CD8-positive, alpha-beta T cell (primary cell): ENCODE measurements at regions of chr16 and their contacts with region 1.

Region 1: DNA sequence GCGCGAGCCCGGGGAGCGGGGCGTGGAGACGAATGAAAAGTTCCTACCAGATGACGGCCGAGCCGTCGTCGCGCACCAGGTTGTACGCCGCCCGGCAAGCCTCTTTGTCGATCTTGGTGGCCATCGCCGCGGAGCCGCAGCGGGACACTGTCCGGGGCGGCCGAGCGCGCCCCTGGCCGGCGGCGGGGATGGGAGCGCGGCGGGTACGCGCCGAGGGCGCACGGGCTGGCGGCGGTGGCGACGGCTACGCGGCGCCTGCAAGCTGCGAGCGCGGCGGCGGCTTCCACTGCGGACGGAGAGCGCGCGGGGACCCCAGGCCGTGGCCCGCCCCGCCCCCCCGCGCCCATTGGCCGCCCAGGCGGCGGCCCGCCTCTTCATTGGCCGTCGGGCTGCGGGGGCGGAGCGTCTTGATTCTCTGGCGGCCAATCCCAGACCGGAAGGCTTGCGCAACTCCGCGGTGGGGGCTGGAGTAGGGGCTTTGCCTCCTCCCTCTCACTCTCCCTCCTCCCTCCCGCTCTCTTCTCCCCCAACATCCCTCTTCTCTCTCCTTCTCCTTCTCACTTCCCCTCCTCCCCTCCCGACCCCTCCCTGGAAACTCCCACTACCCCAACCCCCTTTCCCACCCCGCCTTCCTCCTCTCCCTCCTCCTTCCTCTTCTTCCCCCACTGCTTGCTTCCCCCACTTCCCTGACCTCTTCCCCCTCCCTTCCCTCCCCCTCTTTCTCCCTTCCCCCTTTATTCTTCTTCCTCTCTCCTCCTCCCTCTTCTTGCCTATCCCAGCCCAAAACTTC is at the start of gene COTL1:
- DNase-seq: peak; percentile 85 to 97 (median 95)
- ATAC-seq: peak; percentile 86
- H3K4me3 ChIP-seq: peak within 1 kb of the TSS; percentile 80 to 82
- H3K4me3 Mint-ChIP-seq: peak within 1 kb of the TSS; percentile 95
- H3K27ac ChIP-seq: peak within 1 kb of the TSS; percentile 49 to 66
- H3K27ac Mint-ChIP-seq: peak within 1 kb of the TSS; percentile 90
- H3K4me1 ChIP-seq: peaks cover 43% of the 10 kb centered on the region
- H3K4me1 Mint-ChIP-seq: peaks cover 47% of the 10 kb centered on the region
- H3K27me3 ChIP-seq: peaks cover 0 to 4% of the 10 kb centered on the region in 2 experiments
- H3K27me3 Mint-ChIP-seq: no peaks in the 10 kb centered on the region
- CTCF ChIP-seq: no peak
- total RNA-seq, gene COTL1: 194 to 199 TPM

Region 2: DNA sequence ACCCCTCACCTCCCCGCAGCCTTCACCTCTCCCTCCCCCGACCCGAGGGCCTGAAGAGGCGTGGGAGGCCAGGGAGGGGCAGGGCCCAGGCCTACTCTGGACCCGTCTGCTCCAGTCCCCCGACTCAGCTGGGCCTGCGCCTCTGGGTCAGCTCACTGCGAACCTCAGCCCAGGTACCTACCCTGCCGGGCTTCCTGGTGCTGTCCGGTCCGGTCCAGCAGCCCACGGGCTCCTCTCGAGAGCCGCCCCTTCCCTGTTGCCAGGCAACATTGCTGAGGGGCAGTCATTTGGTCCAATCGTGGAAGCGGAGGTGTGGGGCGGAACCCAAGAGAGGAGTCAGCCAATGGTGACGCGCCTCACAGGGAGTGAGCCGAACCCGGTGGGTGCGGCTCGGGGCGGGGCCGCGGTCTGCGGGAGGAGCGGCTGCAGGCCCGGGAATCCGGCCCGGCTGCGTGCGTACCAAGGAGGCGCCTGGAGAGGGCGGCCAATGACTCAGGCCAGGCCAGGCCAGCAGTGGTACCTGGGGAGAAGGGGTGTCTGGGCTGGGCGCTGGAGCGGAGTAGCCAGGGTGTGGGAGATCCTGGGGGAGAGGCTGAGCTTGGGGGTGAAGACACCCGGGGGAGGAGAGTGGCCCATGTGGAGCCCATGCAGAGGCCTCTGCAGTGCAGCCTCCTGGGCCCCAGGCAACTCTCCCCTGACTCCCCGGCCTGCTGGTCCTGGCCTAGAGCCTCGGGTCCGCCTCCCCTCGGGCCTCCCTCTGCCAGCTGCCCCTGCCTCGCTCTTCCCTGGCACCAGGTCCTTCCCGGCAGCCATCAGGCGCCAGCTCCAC is 113.4 kb before region 1 on chr16 and contains the start of gene MEAK7:
- CTCF ChIA-PET with region 1: interaction called, 392 read pairs
- POLR2A ChIA-PET with region 1: interaction called, 8 read pairs
- intact Hi-C with region 1: no loop called
- DNase-seq: peak; percentile 95 to 98 (median 97)
- ATAC-seq: peak; percentile 94
- H3K4me3 ChIP-seq: peak within 1 kb of the TSS; percentile 74 to 83
- H3K4me3 Mint-ChIP-seq: peak within 1 kb of the TSS; percentile 90
- H3K27ac ChIP-seq: peak within 1 kb of the TSS; percentile 43
- H3K27ac Mint-ChIP-seq: peak within 1 kb of the TSS; percentile 84
- H3K4me1 ChIP-seq: peaks cover 56% of the 10 kb centered on the region
- H3K4me1 Mint-ChIP-seq: peaks cover 57% of the 10 kb centered on the region
- H3K27me3 ChIP-seq: peaks cover 0 to 2% of the 10 kb centered on the region in 2 experiments
- H3K27me3 Mint-ChIP-seq: no peaks in the 10 kb centered on the region
- CTCF ChIP-seq: no peak
- total RNA-seq, gene MEAK7: 2.1 to 2.2 TPM

Region 3: GRCh38 chr16:84555418-84556195 is 62.4 kb before region 1 on chr16:
- CTCF ChIA-PET with region 1: interaction called, 19 read pairs
- POLR2A ChIA-PET with region 1: interaction called, 8 read pairs
- intact Hi-C with region 1: loop called in 1 of 2 experiments (anchors 1 kb)
- DNase-seq: peak in 2 of 9 experiments; percentile 12 to 48
- ATAC-seq: no peak
- H3K4me3 ChIP-seq: no peak overlapping the region
- H3K4me3 Mint-ChIP-seq: no peak overlapping the region
- H3K27ac ChIP-seq: peak overlapping the region in 1 of 2 experiments; percentile 63
- H3K27ac Mint-ChIP-seq: no peak overlapping the region
- H3K4me1 ChIP-seq: peaks cover 41% of the 10 kb centered on the region
- H3K4me1 Mint-ChIP-seq: peaks cover 41% of the 10 kb centered on the region
- H3K27me3 ChIP-seq: no peaks in the 10 kb centered on the region
- H3K27me3 Mint-ChIP-seq: no peaks in the 10 kb centered on the region
- CTCF ChIP-seq: no peak

Region 4: GRCh38 chr16:84599521-84600202 is 18.3 kb before region 1 on chr16:
- CTCF ChIA-PET with region 1: interaction called, 23 read pairs
- POLR2A ChIA-PET with region 1: interaction called, 59 read pairs
- intact Hi-C with region 1: loop called (anchors 1 kb)
- DNase-seq: peak in 6 of 9 experiments; percentile 51 to 77 (median 62)
- ATAC-seq: peak; percentile 23
- H3K4me3 ChIP-seq: peak overlapping the region; percentile 39
- H3K4me3 Mint-ChIP-seq: peak overlapping the region; percentile 80
- H3K27ac ChIP-seq: peak overlapping the region; percentile 34 to 80
- H3K27ac Mint-ChIP-seq: peak overlapping the region; percentile 97
- H3K4me1 ChIP-seq: peaks cover 91% of the 10 kb centered on the region
- H3K4me1 Mint-ChIP-seq: peaks cover 91% of the 10 kb centered on the region
- H3K27me3 ChIP-seq: no peaks in the 10 kb centered on the region
- H3K27me3 Mint-ChIP-seq: no peaks in the 10 kb centered on the region
- CTCF ChIP-seq: no peak

Region 5: DNA sequence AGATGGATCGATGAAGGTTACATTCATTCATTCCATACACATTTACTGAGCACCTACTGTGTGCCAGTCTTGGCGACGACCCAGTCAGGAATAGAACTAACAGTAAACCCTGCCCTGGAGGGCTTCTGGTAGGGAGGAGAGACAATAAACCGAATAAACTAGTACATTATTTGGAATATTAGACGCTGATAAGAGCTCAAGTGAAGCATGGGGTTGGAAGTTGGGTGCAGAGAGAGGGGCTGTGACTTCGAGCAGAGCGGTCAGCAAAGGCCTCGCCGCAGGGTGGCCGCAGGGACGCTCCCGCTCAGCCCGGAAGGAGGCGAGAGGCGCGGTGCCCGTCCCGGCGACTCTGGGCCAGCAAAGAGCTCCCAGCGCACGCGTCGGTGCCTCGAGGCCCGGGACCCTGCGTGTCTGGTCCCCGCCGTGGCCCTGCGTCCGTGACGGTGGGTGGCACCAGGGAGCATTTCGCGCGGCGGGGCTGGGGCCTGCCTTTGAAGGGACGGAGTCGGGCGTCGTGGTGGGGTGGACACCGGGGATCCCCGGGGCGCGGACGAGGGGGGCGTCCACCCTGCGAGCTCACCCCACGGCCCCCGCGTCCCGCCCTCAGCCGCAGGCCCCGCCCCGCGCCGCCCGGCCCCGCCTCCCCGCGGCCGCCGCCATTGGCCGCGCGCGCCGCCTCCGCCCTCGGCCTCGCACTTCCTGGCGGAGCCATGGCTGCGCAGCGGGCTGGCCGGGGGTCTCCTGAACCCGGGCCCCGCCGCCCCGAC is 30.0 kb after region 1 on chr16 and contains the start of gene KLHL36:
- CTCF ChIA-PET with region 1: interaction called, 21 read pairs
- POLR2A ChIA-PET with region 1: interaction called, 5 read pairs
- intact Hi-C with region 1: loop called in 1 of 2 experiments (anchors 2 kb)
- DNase-seq: peak; percentile 53 to 84 (median 71)
- ATAC-seq: peak; percentile 84
- H3K4me3 ChIP-seq: peak within 1 kb of the TSS; percentile 59 to 63
- H3K4me3 Mint-ChIP-seq: peak within 1 kb of the TSS; percentile 87
- H3K27ac ChIP-seq: peak within 1 kb of the TSS; percentile 44 to 68
- H3K27ac Mint-ChIP-seq: peak within 1 kb of the TSS; percentile 90
- H3K4me1 ChIP-seq: peaks cover 45% of the 10 kb centered on the region
- H3K4me1 Mint-ChIP-seq: peaks cover 44% of the 10 kb centered on the region
- H3K27me3 ChIP-seq: no peaks in the 10 kb centered on the region
- H3K27me3 Mint-ChIP-seq: no peaks in the 10 kb centered on the region
- CTCF ChIP-seq: no peak
- total RNA-seq, gene KLHL36: 50.8 to 56.5 TPM

Region 6: DNA sequence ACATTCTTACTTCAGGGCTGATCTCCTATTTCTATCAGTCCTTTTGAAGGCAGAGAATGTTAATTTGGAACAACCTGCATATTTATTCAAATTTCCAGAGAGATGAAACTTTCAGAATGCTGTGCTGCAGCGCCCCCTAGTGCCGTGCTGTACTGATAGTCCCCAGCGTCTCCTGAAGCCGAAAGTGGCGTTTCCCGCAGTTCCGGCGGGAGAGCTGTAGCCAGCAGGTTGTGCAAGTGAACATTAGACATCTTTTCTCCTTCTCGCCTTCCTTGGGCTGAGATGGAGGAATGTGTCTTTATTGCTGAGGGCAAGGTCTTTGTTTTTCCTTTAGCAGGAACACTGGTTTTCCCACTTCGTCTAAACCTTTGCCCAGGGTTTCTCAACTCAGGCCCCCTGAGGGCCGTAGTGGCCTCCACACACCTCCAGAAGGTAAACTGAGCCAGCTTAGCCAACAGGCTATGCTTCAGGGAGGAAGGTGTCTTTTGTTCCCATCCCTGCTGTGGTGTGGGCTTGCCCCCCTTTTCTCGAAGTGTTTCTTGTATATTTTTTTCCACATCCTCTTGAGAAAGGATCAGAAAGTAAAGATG is 108.2 kb after region 1 on chr16:
- CTCF ChIA-PET with region 1: interaction called, 327 read pairs
- POLR2A ChIA-PET with region 1: no interaction called
- intact Hi-C with region 1: loop called (anchors 1 kb)
- DNase-seq: peak; percentile 74 to 92 (median 83)
- ATAC-seq: peak; percentile 76
- H3K4me3 ChIP-seq: no peak overlapping the region
- H3K4me3 Mint-ChIP-seq: peak overlapping the region; percentile 50
- H3K27ac ChIP-seq: no peak overlapping the region
- H3K27ac Mint-ChIP-seq: no peak overlapping the region
- H3K4me1 ChIP-seq: peaks cover 34% of the 10 kb centered on the region
- H3K4me1 Mint-ChIP-seq: peaks cover 64% of the 10 kb centered on the region
- H3K27me3 ChIP-seq: no peaks in the 10 kb centered on the region
- H3K27me3 Mint-ChIP-seq: no peaks in the 10 kb centered on the region
- CTCF ChIP-seq: peak; percentile 98

Region 7: GRCh38 chr16:84765616-84766580 is 147.9 kb after region 1 on chr16:
- CTCF ChIA-PET with region 1: no interaction called
- POLR2A ChIA-PET with region 1: no interaction called
- intact Hi-C with region 1: no loop called
- DNase-seq: peak in 1 of 9 experiments; percentile 38
- ATAC-seq: peak; percentile 63
- H3K4me3 ChIP-seq: no peak overlapping the region
- H3K4me3 Mint-ChIP-seq: no peak overlapping the region
- H3K27ac ChIP-seq: no peak overlapping the region
- H3K27ac Mint-ChIP-seq: peak overlapping the region; percentile 84
- H3K4me1 ChIP-seq: peaks cover 31% of the 10 kb centered on the region
- H3K4me1 Mint-ChIP-seq: peaks cover 28% of the 10 kb centered on the region
- H3K27me3 ChIP-seq: no peaks in the 10 kb centered on the region
- H3K27me3 Mint-ChIP-seq: no peaks in the 10 kb centered on the region
- CTCF ChIP-seq: no peak

Region 8: DNA sequence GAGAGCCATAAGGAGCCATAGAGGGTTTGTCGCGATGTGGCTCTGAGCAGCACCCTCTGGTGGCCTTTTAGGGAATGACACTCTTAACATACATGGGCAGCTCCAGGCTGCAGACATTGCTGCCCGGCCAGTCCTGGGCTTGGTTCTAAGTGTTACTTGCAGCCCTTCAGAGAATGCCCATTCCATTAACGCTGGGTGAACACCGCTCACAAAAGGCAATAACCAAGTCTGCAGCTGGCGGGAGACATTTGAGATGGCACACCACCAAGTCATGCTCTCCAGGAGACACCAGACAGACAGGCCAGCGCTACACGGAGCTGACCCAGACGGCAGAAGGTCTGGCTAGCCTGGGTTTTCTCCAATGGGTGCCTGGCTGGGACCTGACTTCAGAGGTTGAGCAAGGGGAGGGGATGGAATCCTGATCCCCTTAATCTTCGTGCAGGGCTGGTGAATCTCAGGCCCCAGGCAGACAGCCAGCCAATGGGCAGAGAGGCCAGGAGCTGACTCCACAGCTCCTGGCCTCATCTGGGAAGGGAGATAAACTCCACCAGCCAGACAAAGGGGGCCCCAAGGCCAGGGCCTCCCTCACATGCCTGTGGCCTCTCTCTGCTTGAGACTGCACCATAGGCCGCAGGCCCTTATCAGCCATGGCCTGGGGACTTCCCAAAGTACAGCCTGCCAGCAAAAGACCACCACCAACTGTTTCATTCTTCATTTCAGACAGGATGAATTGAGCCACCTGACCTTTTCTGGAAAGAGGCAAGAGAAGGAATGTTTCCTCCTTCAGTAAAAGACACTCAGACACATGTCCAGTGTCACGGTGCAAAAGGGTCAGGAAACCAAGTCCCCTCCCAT is 334.6 kb after region 1 on chr16:
- CTCF ChIA-PET with region 1: no interaction called
- POLR2A ChIA-PET with region 1: no interaction called
- intact Hi-C with region 1: loop called in 1 of 2 experiments (anchors 2 kb)
- DNase-seq: peak; percentile 42 to 84 (median 67)
- ATAC-seq: peak; percentile 92
- H3K4me3 ChIP-seq: no peak overlapping the region
- H3K4me3 Mint-ChIP-seq: no peak overlapping the region
- H3K27ac ChIP-seq: no peak overlapping the region
- H3K27ac Mint-ChIP-seq: no peak overlapping the region
- H3K4me1 ChIP-seq: peaks cover 16% of the 10 kb centered on the region
- H3K4me1 Mint-ChIP-seq: peaks cover 9% of the 10 kb centered on the region
- H3K27me3 ChIP-seq: peaks cover 0 to 4% of the 10 kb centered on the region in 2 experiments
- H3K27me3 Mint-ChIP-seq: no peaks in the 10 kb centered on the region
- CTCF ChIP-seq: peak; percentile 93